ENCODE measurements at regions of chr1 and their contacts with region 1.

Region 1: DNA sequence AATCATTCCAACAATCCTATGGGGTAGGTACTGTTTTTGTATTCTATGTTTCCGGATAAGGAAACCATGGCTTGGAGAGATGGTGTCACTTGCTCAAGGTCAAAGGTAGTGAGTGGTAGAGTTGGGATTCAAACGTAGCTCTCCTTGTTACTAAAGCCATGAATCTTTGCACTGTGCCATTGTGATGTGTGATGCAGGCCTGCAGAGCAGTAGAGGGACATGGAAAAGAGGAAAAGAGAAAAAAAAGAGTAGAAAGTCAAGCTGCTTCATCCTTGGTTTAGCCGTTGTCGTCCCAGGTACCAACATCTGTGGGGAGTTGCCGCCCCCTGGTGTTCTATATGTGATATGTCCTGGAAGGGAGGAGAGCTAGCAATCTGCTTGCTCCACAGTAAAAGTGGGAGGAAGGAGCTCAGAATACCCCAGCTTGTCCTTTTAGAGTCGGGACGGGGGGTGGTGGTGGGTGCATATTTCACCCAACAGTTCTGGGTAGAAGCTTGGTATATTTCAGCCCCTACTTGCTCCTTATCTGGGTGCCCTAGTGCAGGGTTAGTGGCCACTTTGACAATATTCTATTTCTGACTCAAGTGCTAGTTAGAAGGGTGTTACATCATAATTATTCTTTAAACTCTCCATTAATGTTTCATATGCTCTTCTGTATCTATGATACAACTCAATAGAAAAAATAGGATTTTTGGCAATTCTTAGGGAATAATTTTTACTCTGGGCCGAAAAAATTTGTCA is 98.4 kb downstream of the EBNA1BP2 start:
- DNase-seq: peak; percentile 85
- ATAC-seq: peak; percentile 90
- H3K4me3 Mint-ChIP-seq: no peak overlapping the region
- H3K27ac Mint-ChIP-seq: peak overlapping the region; percentile 47
- H3K4me1 Mint-ChIP-seq: peaks cover 2% of the 10 kb centered on the region
- H3K27me3 Mint-ChIP-seq: no peaks in the 10 kb centered on the region
- CTCF ChIP-seq: peak; percentile 84

Region 2: GRCh38 chr1:42576935-42577334 is 496.7 kb before region 1 on chr1:
- CTCF ChIA-PET with region 1: interaction called, 4 read pairs
- POLR2A ChIA-PET with region 1: no interaction called
- intact Hi-C with region 1: loop called (anchors 10 kb)
- DNase-seq: no peak
- ATAC-seq: no peak
- H3K4me3 Mint-ChIP-seq: no peak overlapping the region
- H3K27ac Mint-ChIP-seq: no peak overlapping the region
- H3K4me1 Mint-ChIP-seq: no peaks in the 10 kb centered on the region
- H3K27me3 Mint-ChIP-seq: no peaks in the 10 kb centered on the region
- CTCF ChIP-seq: no peak

Region 3: DNA sequence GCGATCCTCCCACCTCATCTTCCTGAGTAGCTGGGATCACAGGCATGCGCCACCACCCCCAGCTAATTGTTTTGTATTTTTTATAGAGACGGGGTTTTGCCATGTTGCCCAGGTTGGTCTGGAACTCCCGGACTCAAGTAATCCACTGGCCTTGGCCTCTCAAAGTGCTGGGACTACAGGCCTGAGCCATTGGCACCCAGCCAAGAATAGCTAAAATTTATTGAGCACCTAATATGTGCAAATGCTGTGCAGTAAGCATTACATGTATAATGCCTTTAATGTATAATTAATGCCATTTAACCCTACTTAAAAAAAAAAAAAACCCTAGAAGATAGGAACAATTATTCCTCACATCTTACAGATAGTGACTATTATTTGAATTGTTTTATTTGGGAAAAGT is 184.4 kb before region 1 on chr1:
- CTCF ChIA-PET with region 1: interaction called, 10 read pairs
- POLR2A ChIA-PET with region 1: no interaction called
- intact Hi-C with region 1: no loop called
- DNase-seq: no peak
- ATAC-seq: no peak
- H3K4me3 Mint-ChIP-seq: no peak overlapping the region
- H3K27ac Mint-ChIP-seq: no peak overlapping the region
- H3K4me1 Mint-ChIP-seq: no peaks in the 10 kb centered on the region
- H3K27me3 Mint-ChIP-seq: no peaks in the 10 kb centered on the region
- CTCF ChIP-seq: no peak

Region 4: DNA sequence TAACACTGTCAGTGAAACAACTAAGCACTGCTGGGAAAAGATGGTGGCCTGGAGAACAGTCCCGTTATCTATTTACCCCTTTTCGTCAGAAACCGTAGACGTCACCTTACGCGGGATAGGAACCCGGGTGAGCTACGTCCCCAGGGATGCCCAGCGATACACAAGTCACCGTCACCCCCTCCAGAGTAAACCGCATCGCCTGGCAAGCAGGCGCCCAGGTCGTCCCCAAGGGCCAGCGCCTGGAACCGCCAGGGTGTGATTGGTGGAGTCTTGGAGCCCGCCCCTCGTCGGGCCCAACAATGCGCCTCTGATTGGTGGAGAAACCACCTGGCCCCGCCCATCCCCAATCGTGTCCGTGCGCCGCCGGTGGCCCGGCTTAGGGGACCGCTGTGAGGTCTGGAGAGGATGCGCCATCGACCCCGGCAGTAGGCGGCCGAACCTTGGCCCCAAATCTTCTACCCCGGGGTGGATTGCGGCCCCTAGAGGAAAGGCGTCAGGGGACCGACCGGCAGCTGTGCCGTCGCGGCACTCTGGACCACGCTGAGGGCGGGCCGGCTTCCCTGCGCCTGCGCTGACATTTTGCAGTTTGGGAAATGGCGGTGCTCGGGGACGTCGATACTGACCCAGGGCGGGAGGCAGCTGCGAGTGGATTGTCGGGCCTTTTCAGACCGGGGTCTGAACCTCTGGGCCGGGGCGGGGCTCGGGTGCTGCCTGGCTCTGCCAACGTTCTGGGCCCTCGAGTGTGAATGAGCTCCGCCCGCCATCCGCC is 149.4 kb before region 1 on chr1:
- CTCF ChIA-PET with region 1: interaction called, 159 read pairs
- POLR2A ChIA-PET with region 1: interaction called, 12 read pairs
- intact Hi-C with region 1: no loop called
- DNase-seq: peak; percentile 95
- ATAC-seq: peak; percentile 88
- H3K4me3 Mint-ChIP-seq: peak overlapping the region; percentile 89
- H3K27ac Mint-ChIP-seq: peak overlapping the region; percentile 94
- H3K4me1 Mint-ChIP-seq: peaks cover 39% of the 10 kb centered on the region
- H3K27me3 Mint-ChIP-seq: no peaks in the 10 kb centered on the region
- CTCF ChIP-seq: no peak

Region 5: GRCh38 chr1:42958488-42959319 is 115.0 kb before region 1 on chr1 and contains the start of gene SLC2A1:
- CTCF ChIA-PET with region 1: interaction called, 14 read pairs
- POLR2A ChIA-PET with region 1: interaction called, 4 read pairs
- intact Hi-C with region 1: no loop called
- DNase-seq: peak; percentile 97
- ATAC-seq: peak; percentile 89
- H3K4me3 Mint-ChIP-seq: peak within 1 kb of the TSS; percentile 96
- H3K27ac Mint-ChIP-seq: peak within 1 kb of the TSS; percentile 100
- H3K4me1 Mint-ChIP-seq: peaks cover 46% of the 10 kb centered on the region
- H3K27me3 Mint-ChIP-seq: peaks cover 7% of the 10 kb centered on the region
- CTCF ChIP-seq: no peak
- total RNA-seq, gene SLC2A1: 158 to 162 TPM

Region 6: GRCh38 chr1:43058545-43059355 is 14.9 kb before region 1 on chr1:
- CTCF ChIA-PET with region 1: interaction called, 24 read pairs
- POLR2A ChIA-PET with region 1: no interaction called
- intact Hi-C with region 1: no loop called
- DNase-seq: peak; percentile 56
- ATAC-seq: peak; percentile 71
- H3K4me3 Mint-ChIP-seq: peak overlapping the region; percentile 14
- H3K27ac Mint-ChIP-seq: peak overlapping the region; percentile 64
- H3K4me1 Mint-ChIP-seq: peaks cover 18% of the 10 kb centered on the region
- H3K27me3 Mint-ChIP-seq: peaks cover 6% of the 10 kb centered on the region
- CTCF ChIP-seq: no peak

Region 7: GRCh38 chr1:43227143-43227764 is 153.6 kb after region 1 on chr1:
- CTCF ChIA-PET with region 1: no interaction called
- POLR2A ChIA-PET with region 1: no interaction called
- intact Hi-C with region 1: no loop called
- DNase-seq: peak; percentile 93
- ATAC-seq: peak; percentile 93
- H3K4me3 Mint-ChIP-seq: no peak overlapping the region
- H3K27ac Mint-ChIP-seq: no peak overlapping the region
- H3K4me1 Mint-ChIP-seq: no peaks in the 10 kb centered on the region
- H3K27me3 Mint-ChIP-seq: no peaks in the 10 kb centered on the region
- CTCF ChIP-seq: peak; percentile 83